Thyroid gland (tissue), 4 donors: ENCODE measurements at regions of chr11 and their contacts with region 1.

Region 1: DNA sequence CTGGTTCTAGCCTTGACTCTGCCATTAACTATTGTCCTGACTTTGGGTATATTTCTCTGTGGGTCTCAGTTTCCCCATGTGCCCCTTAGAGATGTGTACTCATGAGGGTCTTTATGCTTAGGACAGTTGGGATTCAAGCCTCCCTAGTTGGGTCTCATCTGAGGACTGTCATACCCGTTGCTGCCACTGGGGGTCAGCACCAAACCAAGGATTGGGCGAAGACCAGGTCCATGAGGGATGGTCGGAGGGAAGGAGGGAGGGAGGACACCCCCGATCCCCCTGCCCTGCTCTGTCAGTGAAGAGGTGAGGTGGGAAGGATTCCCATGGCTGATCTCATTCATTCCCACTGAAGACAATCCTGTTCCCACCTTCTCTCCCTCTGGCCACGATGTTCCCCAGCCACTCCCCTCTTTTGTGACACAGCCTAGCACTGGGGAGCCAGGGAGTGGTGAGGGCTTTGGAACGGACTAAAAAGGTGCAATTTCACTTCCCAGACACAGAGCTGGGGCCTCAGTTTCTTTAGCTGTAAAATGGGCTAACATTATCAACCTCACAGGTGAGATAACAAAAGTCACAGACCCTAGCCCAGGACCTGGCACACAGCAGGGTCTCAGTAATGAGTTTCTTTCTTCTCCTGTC is 12.4 kb upstream of the KLHL35 start:
- DNase-seq: peak; percentile 69 to 71
- H3K4me3 ChIP-seq: no peak overlapping the region
- H3K27ac ChIP-seq: no peak overlapping the region
- H3K4me1 ChIP-seq: no peaks in the 10 kb centered on the region
- H3K27me3 ChIP-seq: no peaks in the 10 kb centered on the region
- CTCF ChIP-seq: peak; percentile 84 to 98 (median 97)
- POLR2A ChIP-seq: no peak

Region 2: GRCh38 chr11:75531325-75531724 is 85.9 kb after region 1 on chr11:
- intact Hi-C with region 1: loop called (anchors 2 kb)
- DNase-seq: no peak
- H3K4me3 ChIP-seq: no peak overlapping the region
- H3K27ac ChIP-seq: no peak overlapping the region
- H3K4me1 ChIP-seq: peaks cover 0 to 5% of the 10 kb centered on the region in 2 donors
- H3K27me3 ChIP-seq: no peaks in the 10 kb centered on the region
- CTCF ChIP-seq: no peak
- POLR2A ChIP-seq: no peak